ENCODE measurements at regions of chr21 and their contacts with region 1.

Region 1: GRCh38 chr21:32727687-32728455 is at the start of gene SYNJ1:
- DNase-seq: peak; percentile 93
- ATAC-seq: peak; percentile 89
- H3K4me3 Mint-ChIP-seq: peak within 1 kb of the TSS; percentile 96
- H3K27ac Mint-ChIP-seq: peak within 1 kb of the TSS; percentile 61
- H3K4me1 Mint-ChIP-seq: peaks cover 9% of the 10 kb centered on the region; the same call in 1 of the 2 replicates
- H3K27me3 Mint-ChIP-seq: no peaks in the 10 kb centered on the region
- CTCF ChIP-seq: no peak
- total RNA-seq, gene SYNJ1: 4.2 to 6.3 TPM (median 6.1 TPM) in 3 replicates

Region 2: DNA sequence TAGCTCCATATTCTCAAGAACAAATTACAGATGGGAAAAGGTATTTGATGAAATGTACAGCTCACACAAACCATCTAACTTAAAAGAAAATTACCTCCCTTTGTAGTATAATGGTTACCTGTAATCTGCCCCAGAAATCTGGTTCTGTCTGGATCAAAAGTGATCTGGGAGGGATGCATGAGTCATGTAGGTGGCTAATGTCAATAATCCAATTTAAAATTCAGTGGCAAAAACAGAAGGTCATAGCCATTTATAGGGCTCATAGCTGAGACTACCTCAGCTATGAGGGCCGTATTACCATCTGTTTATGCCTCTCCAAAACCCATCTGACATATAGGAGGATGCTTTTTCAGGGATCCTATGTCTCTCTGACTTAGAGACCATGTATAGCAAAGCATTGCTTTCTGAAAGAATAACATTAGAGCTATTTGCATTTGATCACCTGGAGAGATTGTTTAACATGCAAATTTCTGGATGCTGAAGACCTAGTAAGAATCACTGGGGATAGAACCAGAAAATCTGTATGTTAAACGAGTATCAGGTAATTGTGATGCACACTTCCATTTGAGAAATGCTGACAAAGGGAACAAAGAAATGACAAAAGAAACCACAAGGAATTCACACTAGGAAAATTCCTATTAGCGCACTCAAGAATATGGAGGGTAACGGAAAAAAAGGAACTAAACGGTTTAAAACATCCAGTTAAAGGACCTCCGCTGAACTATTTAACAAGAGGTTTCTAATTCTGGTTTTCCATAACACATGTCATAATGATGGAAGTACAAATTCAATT is 26.1 kb after region 1 on chr21:
- CTCF ChIA-PET with region 1: no interaction called
- POLR2A ChIA-PET with region 1: no interaction called
- DNase-seq: no peak
- ATAC-seq: no peak
- H3K4me3 Mint-ChIP-seq: no peak overlapping the region
- H3K27ac Mint-ChIP-seq: no peak overlapping the region
- H3K4me1 Mint-ChIP-seq: peaks cover 13% of the 10 kb centered on the region
- H3K27me3 Mint-ChIP-seq: no peaks in the 10 kb centered on the region
- CTCF ChIP-seq: no peak

Region 3: GRCh38 chr21:32770871-32771523 is 43.1 kb after region 1 on chr21:
- CTCF ChIA-PET with region 1: interaction called, 4 read pairs
- POLR2A ChIA-PET with region 1: interaction called, 10 read pairs
- DNase-seq: peak; percentile 61
- ATAC-seq: peak; percentile 46
- H3K4me3 Mint-ChIP-seq: peak overlapping the region; percentile 100
- H3K27ac Mint-ChIP-seq: peak overlapping the region; percentile 98
- H3K4me1 Mint-ChIP-seq: peaks cover 44% of the 10 kb centered on the region
- H3K27me3 Mint-ChIP-seq: no peaks in the 10 kb centered on the region; the same call in 1 of the 2 replicates
- CTCF ChIP-seq: no peak